ENCODE measurements at regions of chr18 and their contacts with region 1.

Region 1: DNA sequence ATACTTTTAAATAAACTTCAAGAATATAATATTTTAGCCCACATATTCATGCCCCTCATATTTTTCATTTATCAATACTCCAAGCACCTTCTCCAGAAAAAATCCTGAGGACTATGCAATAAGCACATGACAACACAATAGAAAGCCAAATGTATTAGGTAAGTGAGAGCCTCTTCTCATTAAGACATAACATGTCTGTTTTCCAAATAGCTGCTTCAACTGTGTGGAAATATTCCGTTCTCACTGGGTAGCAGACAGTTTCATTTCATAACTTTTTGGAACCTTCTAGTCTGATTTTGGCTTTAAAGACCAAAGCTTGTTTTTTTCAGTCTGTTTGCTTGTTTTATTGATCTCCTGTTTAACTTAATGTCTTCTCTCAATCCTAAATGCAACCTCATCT is 137.8 kb downstream of the PIK3C3 start:
- DNase-seq: no peak
- ATAC-seq: no peak
- H3K4me3 ChIP-seq: no peak overlapping the region
- H3K27ac ChIP-seq: no peak overlapping the region
- H3K4me1 ChIP-seq: no peaks in the 10 kb centered on the region
- H3K27me3 ChIP-seq: no peaks in the 10 kb centered on the region
- CTCF ChIP-seq: no peak

Region 2: DNA sequence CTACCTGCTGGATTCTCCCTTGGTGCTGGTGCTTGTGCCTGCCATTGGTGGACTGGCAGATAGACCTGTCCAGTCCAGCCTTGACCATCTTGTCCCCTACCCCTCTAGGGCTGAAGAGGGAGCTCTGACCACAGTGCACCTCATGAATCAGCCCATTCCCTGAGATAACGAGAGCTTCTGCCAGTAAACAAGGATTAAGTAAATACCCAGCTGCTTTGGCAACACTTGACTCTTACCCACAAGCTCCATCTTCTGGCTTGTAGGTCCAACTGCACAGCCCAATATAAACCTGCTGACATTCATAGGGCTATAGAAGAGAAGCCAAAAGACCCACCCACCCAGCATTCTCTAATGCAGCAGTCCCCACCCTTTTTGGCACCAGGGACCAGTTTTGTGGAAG is 48.6 kb after region 1 on chr18:
- CTCF ChIA-PET with region 1: no interaction called
- POLR2A ChIA-PET with region 1: no interaction called
- in situ Hi-C with region 1: no loop called
- intact Hi-C with region 1: loop called (anchors 5 kb)
- DNase-seq: no peak
- ATAC-seq: no peak
- H3K4me3 ChIP-seq: no peak overlapping the region
- H3K27ac ChIP-seq: no peak overlapping the region
- H3K4me1 ChIP-seq: no peaks in the 10 kb centered on the region
- H3K27me3 ChIP-seq: no peaks in the 10 kb centered on the region
- CTCF ChIP-seq: no peak